Endothelial cell of umbilical vein (primary cell): ENCODE measurements at regions of chr22 and their contacts with region 1.

Region 1: GRCh38 chr22:22848364-22848866 is 39.2 kb upstream of the IGLL5 start:
- DNase-seq: peak; percentile 40
- H3K4me3 ChIP-seq: no peak overlapping the region
- H3K27ac ChIP-seq: no peak overlapping the region
- H3K4me1 ChIP-seq: no peaks in the 10 kb centered on the region
- H3K27me3 ChIP-seq: peaks cover 3 to 25% of the 10 kb centered on the region in 2 experiments
- CTCF ChIP-seq: peak; percentile 90 to 93
- POLR2A ChIP-seq: no peak

Region 2: GRCh38 chr22:22681221-22681739 is 167.1 kb before region 1 on chr22:
- CTCF ChIA-PET with region 1: no interaction called
- POLR2A ChIA-PET with region 1: no interaction called
- dilution Hi-C with region 1: no loop called
- intact Hi-C with region 1: no loop called
- DNase-seq: no peak
- H3K4me3 ChIP-seq: no peak overlapping the region
- H3K27ac ChIP-seq: no peak overlapping the region
- H3K4me1 ChIP-seq: no peaks in the 10 kb centered on the region
- H3K27me3 ChIP-seq: no peaks in the 10 kb centered on the region
- CTCF ChIP-seq: no peak
- POLR2A ChIP-seq: no peak

Region 3: GRCh38 chr22:22830193-22830592 is 18.2 kb before region 1 on chr22:
- CTCF ChIA-PET with region 1: interaction called, 17 read pairs
- POLR2A ChIA-PET with region 1: no interaction called
- dilution Hi-C with region 1: no loop called
- intact Hi-C with region 1: no loop called
- DNase-seq: no peak
- H3K4me3 ChIP-seq: no peak overlapping the region
- H3K27ac ChIP-seq: no peak overlapping the region
- H3K4me1 ChIP-seq: no peaks in the 10 kb centered on the region
- H3K27me3 ChIP-seq: peaks cover 2 to 5% of the 10 kb centered on the region in 2 experiments
- CTCF ChIP-seq: no peak
- POLR2A ChIP-seq: no peak

Region 4: DNA sequence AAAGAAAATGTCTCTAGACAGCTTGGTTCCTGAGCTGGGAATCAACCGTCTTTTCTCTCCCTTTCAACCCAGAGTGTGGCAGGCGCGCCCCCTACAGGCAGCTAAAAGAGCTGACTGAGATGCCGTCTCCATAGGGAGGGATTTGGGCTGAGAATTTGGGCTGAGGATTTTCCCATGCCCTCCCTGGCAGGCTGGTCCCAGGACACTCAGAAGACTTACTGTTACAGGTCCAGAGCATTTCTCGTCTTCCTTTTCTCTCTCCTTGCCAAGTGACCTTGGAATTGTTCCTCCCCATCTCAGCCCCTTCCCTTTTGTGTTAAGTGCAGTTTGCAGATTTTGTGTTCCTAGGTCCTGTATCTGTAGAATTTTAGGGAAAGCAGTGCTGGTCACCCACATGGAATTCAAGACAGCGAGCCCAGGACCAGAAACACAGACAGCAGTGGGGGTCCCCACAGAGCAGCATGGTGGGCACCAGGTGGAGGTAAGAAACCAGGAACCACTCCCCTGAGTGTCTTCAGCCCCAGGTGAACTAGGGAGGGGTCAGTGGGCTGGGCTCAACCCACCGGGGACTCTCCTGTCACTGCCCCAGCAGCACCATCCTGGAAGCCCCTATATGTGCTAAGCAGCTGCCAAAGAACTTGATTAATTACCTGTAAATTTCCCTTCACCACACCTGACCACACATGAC is 29.3 kb after region 1 on chr22:
- CTCF ChIA-PET with region 1: interaction called, 36 read pairs
- POLR2A ChIA-PET with region 1: no interaction called
- dilution Hi-C with region 1: no loop called
- intact Hi-C with region 1: loop called (anchors 1 kb)
- DNase-seq: peak; percentile 40
- H3K4me3 ChIP-seq: no peak overlapping the region
- H3K27ac ChIP-seq: no peak overlapping the region
- H3K4me1 ChIP-seq: no peaks in the 10 kb centered on the region
- H3K27me3 ChIP-seq: no peaks in the 10 kb centered on the region
- CTCF ChIP-seq: peak; percentile 65 to 85
- POLR2A ChIP-seq: no peak

Region 5: DNA sequence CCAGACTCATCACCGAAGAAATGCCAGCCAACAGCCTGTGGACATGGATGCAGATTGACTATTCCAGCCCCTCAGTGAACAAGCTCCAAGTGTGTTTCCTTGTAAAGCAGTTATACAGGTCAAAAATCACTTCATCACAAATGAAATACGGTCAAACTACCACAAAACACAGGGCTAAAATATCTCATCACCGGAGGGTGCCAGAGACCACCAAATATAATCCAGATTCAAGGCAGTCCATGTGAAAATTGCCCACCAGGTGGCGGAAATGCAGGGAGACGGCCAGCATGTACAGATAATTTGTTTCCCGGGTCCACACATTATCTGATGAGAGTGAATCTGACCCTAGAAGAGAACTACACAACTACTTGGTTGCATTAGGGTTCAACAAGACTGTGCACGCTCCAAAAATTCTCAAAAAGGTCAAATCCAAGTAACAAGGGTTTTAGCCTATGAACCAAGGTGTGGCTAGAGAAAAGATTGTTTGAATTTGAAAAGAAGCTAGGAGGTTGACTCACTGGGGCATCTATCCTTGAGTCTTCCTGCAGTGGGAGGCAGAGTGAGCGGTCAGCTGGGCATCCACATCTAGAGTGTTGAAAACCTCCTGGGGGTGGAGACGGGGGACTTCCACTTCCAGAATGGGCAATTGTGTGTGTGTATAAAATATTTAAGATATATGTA is 110.9 kb after region 1 on chr22:
- CTCF ChIA-PET with region 1: interaction called, 54 read pairs
- POLR2A ChIA-PET with region 1: no interaction called
- dilution Hi-C with region 1: no loop called
- intact Hi-C with region 1: loop called (anchors 1 kb)
- DNase-seq: peak; percentile 71
- H3K4me3 ChIP-seq: no peak overlapping the region
- H3K27ac ChIP-seq: no peak overlapping the region
- H3K4me1 ChIP-seq: no peaks in the 10 kb centered on the region
- H3K27me3 ChIP-seq: peaks cover 9 to 17% of the 10 kb centered on the region in 2 experiments
- CTCF ChIP-seq: peak; percentile 70 to 81
- POLR2A ChIP-seq: no peak